Psoas muscle (tissue), 8 donors: ENCODE measurements at regions of chr1 and their contacts with region 1.

Region 1: GRCh38 chr1:216771922-216772321 is 48.7 kb upstream of the ESRRG start:
- DNase-seq: no peak
- ATAC-seq: no peak
- H3K4me3 ChIP-seq: no peak overlapping the region
- H3K27ac ChIP-seq: no peak overlapping the region
- H3K4me1 ChIP-seq: no peaks in the 10 kb centered on the region
- H3K27me3 ChIP-seq: no peaks in the 10 kb centered on the region
- CTCF ChIP-seq: no peak

Region 2: DNA sequence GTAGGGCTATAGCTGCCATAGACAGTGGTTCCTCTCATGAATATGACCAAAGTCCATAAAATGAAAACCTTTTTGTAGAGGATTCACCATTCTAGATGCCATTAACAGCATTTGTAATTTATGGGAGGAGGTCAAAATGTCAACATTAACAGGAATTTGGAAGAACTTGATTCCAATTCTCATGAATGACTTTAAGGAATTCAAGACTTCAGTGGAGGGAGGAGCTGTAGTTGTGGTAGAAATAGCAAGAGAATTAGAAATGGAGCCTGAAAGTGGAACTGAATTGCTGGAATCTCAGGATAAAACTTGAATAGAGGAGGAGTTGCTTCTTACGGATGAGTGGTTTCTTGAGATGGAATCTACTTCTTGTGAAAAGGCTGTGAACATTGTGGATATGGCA is 16.7 kb after region 1 on chr1:
- intact Hi-C with region 1: loop called in 1 of 2 experiments (anchors 2 kb)
- DNase-seq: no peak
- ATAC-seq: no peak
- H3K4me3 ChIP-seq: no peak overlapping the region
- H3K27ac ChIP-seq: no peak overlapping the region
- H3K4me1 ChIP-seq: peaks cover 5% of the 10 kb centered on the region
- H3K27me3 ChIP-seq: no peaks in the 10 kb centered on the region
- CTCF ChIP-seq: no peak